Ascending aorta (tissue), 2 donors: ENCODE measurements at regions of chr1 and their contacts with region 1.

Region 1: GRCh38 chr1:40691538-40692428 is at the start of gene NFYC:
- DNase-seq: peak; percentile 94 to 99
- H3K4me3 ChIP-seq: peak within 1 kb of the TSS; percentile 93 to 95
- H3K27ac ChIP-seq: peak within 1 kb of the TSS; percentile 99 to 100
- H3K4me1 ChIP-seq: peaks cover 0 to 16% of the 10 kb centered on the region in 2 donors
- H3K27me3 ChIP-seq: no peaks in the 10 kb centered on the region
- CTCF ChIP-seq: no peak
- total RNA-seq, gene NFYC: 75.9 TPM

Region 2: GRCh38 chr1:40622936-40623629 is 68.7 kb before region 1 on chr1:
- intact Hi-C with region 1: no loop called
- DNase-seq: peak in 1 of 2 donors; percentile 30
- H3K4me3 ChIP-seq: no peak overlapping the region
- H3K27ac ChIP-seq: no peak overlapping the region
- H3K4me1 ChIP-seq: no peaks in the 10 kb centered on the region
- H3K27me3 ChIP-seq: no peaks in the 10 kb centered on the region
- CTCF ChIP-seq: no peak

Region 3: DNA sequence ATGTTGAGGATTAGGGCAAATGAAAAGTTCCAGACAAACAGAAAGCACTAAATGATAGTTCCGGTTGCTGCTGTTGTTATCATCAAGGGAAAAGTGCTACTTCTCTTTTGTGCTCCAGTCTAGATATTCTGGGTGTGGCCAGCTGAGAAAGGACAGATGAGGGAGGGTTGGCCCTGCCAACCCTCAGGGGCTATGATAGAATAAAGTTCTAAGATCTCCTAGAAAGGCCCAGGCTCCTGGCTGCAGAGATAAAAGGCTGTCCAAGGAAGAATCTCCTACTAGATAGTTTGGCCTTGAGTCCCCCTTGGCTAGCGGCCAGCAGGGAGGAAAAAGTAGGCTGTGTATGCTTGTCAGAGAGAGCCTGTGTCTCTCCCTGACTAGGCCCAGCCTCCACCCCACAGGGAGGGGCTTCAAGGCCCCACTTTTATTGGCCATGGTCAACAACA is 57.8 kb before region 1 on chr1:
- intact Hi-C with region 1: no loop called
- DNase-seq: no peak
- H3K4me3 ChIP-seq: no peak overlapping the region
- H3K27ac ChIP-seq: peak overlapping the region; percentile 10 to 19
- H3K4me1 ChIP-seq: peaks cover 0 to 5% of the 10 kb centered on the region in 2 donors
- H3K27me3 ChIP-seq: no peaks in the 10 kb centered on the region
- CTCF ChIP-seq: no peak

Region 4: GRCh38 chr1:40668769-40669525 is 22.8 kb before region 1 on chr1:
- intact Hi-C with region 1: loop called (anchors 1 kb)
- DNase-seq: peak in 1 of 2 donors; percentile 85
- H3K4me3 ChIP-seq: peak overlapping the region in 1 of 2 donors; percentile 45
- H3K27ac ChIP-seq: no peak overlapping the region
- H3K4me1 ChIP-seq: peaks cover 0 to 11% of the 10 kb centered on the region in 2 donors
- H3K27me3 ChIP-seq: no peaks in the 10 kb centered on the region
- CTCF ChIP-seq: peak; percentile 78 to 98 (median 96)

Region 5: GRCh38 chr1:40802078-40802741 is 110.4 kb after region 1 on chr1:
- intact Hi-C with region 1: loop called (anchors 5 kb)
- DNase-seq: peak; percentile 49 to 92
- H3K4me3 ChIP-seq: peak overlapping the region; percentile 36 to 59
- H3K27ac ChIP-seq: peak overlapping the region; percentile 84 to 95
- H3K4me1 ChIP-seq: peaks cover 31 to 50% of the 10 kb centered on the region in 2 donors
- H3K27me3 ChIP-seq: no peaks in the 10 kb centered on the region
- CTCF ChIP-seq: no peak

Region 6: DNA sequence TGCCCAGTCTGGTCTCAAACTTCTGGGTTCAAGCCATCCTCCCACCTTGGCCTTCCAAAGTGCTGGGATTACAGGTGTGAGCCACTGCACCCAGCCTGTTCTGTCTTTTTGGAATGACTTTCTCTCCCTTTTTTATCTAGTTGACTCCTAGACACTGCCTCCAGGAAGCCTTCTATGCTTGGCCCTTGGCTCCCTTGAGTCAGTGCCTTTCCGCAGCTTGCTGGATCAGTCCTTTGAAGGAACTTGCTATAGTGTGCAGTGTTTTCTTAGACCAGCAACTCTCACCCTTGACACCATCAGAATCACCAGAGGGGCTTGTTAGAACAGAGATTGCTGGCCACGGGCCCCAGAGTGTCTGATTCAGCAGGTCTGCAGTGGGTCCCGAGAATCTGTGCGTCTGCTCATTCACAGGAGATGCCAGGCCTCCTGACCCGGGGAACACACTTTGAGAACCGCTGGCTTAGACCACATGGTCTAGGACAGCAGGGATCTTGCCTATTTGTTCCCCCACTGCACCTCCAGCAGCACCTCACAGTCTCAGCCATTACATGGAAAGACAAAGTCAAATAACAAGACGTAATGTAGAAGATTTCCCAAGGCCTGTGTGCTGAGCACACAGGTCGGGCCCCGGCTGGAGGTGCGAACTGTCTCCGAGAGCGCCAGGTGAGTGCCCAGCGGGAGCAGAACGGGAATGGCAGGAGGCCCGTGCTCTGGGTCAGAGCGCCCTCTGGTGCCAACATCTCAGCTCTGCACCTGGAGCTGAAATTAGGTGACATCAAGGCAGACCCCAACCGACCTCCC is 260.4 kb after region 1 on chr1:
- intact Hi-C with region 1: loop called (anchors 5 kb)
- DNase-seq: peak in 1 of 2 donors; percentile 86
- H3K4me3 ChIP-seq: no peak overlapping the region
- H3K27ac ChIP-seq: no peak overlapping the region
- H3K4me1 ChIP-seq: peaks cover 4 to 9% of the 10 kb centered on the region in 2 donors
- H3K27me3 ChIP-seq: no peaks in the 10 kb centered on the region
- CTCF ChIP-seq: peak; percentile 89 to 95 (median 91)